Activated CD4-positive, alpha-beta T cell treated with anti-CD3 and anti-CD28 coated beads for 36 hours (primary cell): ENCODE measurements at regions of chr13 and their contacts with region 1.

Region 1: GRCh38 chr13:44917589-44918325 is 71.5 kb downstream of the NUFIP1 start:
- DNase-seq: peak; percentile 96
- ATAC-seq: peak; percentile 81
- H3K4me3 Mint-ChIP-seq: no peak overlapping the region
- H3K27ac Mint-ChIP-seq: no peak overlapping the region
- H3K4me1 Mint-ChIP-seq: peaks cover 3% of the 10 kb centered on the region
- H3K27me3 Mint-ChIP-seq: no peaks in the 10 kb centered on the region

Region 2: DNA sequence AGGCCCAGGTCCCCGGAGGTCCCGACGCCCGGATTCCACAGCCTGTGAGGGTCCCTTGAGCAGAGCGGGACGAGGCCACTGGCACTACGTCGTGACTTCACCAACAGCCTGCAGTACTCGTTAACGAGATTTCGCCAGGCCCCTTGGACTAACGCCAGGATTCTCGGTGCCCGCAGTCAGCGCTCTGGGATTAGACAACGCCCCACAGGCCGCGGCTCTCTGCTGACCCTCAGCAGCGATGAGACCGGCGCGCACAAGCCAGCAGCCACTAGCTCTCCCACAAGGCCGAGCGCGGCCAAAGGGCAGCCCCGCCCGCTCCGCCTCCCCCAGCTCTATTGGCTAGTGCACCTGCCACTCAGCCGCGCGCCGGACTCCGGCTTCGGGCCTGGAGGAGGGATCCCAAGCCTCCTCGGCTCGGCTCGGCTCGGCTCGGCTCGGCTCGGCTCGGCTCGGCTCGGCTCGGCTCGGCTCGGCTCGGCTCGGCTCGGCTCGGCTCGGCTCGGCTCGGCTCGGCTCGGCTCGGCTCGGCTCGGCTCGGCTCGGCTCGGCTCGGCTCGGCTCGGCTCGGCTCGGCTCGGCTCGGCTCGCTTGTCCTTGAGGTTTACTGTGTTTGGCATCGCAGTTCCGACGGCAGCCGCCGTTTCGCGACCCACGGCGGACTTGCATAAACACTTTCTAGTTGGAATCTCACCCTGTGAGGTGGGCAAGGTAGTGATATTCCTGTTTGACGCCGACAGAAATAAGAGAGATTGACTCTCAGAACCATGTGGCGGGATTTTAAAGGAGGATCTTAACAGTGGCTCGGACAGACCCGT is 775.8 kb before region 1 on chr13:
- CTCF ChIA-PET with region 1: no interaction called
- POLR2A ChIA-PET with region 1: no interaction called
- intact Hi-C with region 1: loop called in 1 of 2 experiments (anchors 1 kb)
- DNase-seq: peak; percentile 96
- ATAC-seq: peak; percentile 100
- H3K4me3 Mint-ChIP-seq: peak overlapping the region; percentile 87
- H3K27ac Mint-ChIP-seq: peak overlapping the region; percentile 90
- H3K4me1 Mint-ChIP-seq: peaks cover 15% of the 10 kb centered on the region
- H3K27me3 Mint-ChIP-seq: peaks cover 4% of the 10 kb centered on the region

Region 3: DNA sequence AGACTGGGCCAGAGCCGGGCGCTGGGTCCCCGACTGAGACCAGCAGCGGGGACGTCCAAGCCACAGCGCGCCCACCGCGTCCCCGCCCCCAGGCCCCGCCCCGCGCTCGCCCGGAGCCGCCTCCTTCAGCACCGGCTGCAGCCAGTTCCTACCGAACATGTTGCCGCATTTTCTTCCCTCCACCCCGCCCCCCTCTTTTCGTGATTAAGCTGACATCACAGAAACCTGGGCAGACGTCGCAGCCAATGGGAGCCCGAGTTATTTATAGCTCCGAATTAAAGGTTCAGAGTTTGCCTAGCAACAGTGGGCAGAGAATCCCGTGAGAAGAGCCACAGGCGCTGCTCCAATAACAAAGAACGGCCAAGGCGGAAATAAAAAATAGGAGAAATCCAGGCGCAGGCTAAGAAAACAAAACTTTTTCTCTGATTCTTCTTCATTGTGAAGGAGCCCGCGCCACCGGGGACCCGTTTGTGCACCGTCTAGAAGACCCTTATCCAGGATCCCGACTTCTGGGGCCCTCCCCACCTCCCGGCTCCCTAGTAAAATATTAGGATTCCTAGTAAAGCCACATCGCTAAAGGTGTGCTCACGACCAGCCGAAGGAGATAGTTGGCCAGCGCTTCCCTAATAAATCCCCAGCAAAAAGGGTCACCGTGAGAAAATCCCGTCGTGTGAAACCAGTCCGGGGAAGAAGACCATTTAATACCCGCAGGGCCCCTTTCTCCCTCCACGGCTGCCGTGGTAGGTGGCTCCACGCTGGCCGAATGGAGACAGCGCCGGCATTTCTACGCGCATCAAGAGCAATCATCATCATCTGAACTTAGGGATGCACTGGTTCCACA is 482.4 kb before region 1 on chr13:
- CTCF ChIA-PET with region 1: interaction called, 4 read pairs
- POLR2A ChIA-PET with region 1: no interaction called
- intact Hi-C with region 1: loop called in 1 of 2 experiments (anchors 1 kb)
- DNase-seq: peak; percentile 94
- ATAC-seq: peak; percentile 84
- H3K4me3 Mint-ChIP-seq: peak overlapping the region; percentile 73
- H3K27ac Mint-ChIP-seq: peak overlapping the region; percentile 55
- H3K4me1 Mint-ChIP-seq: peaks cover 18% of the 10 kb centered on the region
- H3K27me3 Mint-ChIP-seq: peaks cover 11% of the 10 kb centered on the region

Region 4: DNA sequence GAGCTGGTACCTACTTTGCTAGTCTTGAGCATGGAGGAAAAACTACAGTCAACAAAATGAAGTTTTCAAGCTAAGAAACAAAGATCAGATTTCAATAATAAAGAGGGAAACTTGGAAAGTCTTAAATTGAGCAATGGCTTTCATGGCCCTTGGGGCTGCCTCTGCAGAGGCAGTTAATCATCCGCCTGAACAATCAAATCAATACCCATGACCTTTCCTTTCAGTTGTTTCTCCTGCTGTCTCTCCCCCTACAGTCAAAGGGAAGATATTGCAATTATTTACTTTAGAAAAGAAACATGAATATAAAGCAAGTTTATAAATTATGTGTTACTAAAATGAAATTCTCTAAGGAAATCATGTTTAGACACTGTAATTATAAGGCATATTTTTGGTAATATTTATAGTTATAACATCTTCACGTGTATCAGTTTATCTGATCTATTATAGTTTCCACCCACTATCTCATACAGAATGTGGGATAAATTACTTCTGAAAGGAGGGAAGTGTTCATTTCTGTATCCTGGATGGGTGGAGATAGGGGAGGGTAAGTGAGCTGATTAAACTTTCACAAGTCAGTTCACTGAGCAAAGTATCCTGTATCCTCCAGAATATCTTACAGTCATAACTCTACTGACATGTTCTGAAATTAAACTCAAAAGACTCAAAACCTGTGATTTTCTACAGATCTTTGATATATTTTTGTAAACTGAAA is 269.2 kb before region 1 on chr13:
- CTCF ChIA-PET with region 1: no interaction called
- POLR2A ChIA-PET with region 1: no interaction called
- intact Hi-C with region 1: loop called in 1 of 2 experiments (anchors 2 kb)
- DNase-seq: peak; percentile 25
- ATAC-seq: peak; percentile 85
- H3K4me3 Mint-ChIP-seq: no peak overlapping the region
- H3K27ac Mint-ChIP-seq: peak overlapping the region; percentile 37
- H3K4me1 Mint-ChIP-seq: peaks cover 23% of the 10 kb centered on the region
- H3K27me3 Mint-ChIP-seq: peaks cover 26% of the 10 kb centered on the region

Region 5: GRCh38 chr13:44815623-44816022 is 102.1 kb before region 1 on chr13:
- CTCF ChIA-PET with region 1: interaction called, 4 read pairs
- POLR2A ChIA-PET with region 1: no interaction called
- intact Hi-C with region 1: loop called (anchors 1 to 5 kb)
- DNase-seq: peak; percentile 70
- ATAC-seq: peak; percentile 85
- H3K4me3 Mint-ChIP-seq: no peak overlapping the region
- H3K27ac Mint-ChIP-seq: no peak overlapping the region
- H3K4me1 Mint-ChIP-seq: peaks cover 32% of the 10 kb centered on the region
- H3K27me3 Mint-ChIP-seq: peaks cover 22% of the 10 kb centered on the region

Region 6: DNA sequence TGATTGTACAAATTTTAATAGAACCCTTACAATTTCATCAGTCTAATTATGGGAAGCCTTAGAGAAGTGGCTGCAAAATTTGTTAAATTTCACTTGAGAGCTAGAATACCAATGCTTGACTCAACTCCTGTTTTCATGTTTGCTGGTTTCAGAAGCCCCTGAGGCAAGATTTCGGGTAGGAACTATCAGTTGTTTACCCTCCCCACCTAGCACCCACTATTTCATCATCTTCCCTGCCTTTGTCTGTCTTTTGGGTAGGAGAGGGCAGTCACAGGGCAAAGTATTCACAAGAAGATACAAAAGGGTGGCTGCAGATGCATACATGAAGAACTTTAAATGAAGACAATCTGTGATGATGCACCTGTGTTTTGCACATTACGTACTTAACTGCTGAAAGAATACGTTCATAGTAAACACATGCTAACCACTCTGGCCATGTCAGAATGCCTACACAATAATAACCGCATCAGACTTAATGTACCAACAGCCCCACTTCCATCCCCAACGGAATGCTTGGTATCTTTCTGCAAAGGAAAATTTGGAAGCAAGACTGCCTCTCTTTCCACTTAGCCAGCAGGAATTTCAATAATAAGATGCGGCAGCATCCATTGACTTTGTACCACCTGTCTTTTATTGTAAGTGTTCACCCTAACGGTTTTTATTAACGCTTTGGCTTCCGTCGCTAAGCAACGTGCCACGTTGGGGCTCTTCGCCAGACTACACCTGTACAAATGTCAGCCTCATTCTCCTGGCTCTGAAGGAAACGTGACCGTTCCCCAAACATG is 392.8 kb after region 1 on chr13:
- CTCF ChIA-PET with region 1: no interaction called
- POLR2A ChIA-PET with region 1: no interaction called
- intact Hi-C with region 1: loop called in 1 of 2 experiments (anchors 2 kb)
- DNase-seq: no peak
- ATAC-seq: no peak
- H3K4me3 Mint-ChIP-seq: peak overlapping the region; percentile 68
- H3K27ac Mint-ChIP-seq: peak overlapping the region; percentile 65
- H3K4me1 Mint-ChIP-seq: peaks cover 20% of the 10 kb centered on the region
- H3K27me3 Mint-ChIP-seq: peaks cover 13% of the 10 kb centered on the region

Region 7: DNA sequence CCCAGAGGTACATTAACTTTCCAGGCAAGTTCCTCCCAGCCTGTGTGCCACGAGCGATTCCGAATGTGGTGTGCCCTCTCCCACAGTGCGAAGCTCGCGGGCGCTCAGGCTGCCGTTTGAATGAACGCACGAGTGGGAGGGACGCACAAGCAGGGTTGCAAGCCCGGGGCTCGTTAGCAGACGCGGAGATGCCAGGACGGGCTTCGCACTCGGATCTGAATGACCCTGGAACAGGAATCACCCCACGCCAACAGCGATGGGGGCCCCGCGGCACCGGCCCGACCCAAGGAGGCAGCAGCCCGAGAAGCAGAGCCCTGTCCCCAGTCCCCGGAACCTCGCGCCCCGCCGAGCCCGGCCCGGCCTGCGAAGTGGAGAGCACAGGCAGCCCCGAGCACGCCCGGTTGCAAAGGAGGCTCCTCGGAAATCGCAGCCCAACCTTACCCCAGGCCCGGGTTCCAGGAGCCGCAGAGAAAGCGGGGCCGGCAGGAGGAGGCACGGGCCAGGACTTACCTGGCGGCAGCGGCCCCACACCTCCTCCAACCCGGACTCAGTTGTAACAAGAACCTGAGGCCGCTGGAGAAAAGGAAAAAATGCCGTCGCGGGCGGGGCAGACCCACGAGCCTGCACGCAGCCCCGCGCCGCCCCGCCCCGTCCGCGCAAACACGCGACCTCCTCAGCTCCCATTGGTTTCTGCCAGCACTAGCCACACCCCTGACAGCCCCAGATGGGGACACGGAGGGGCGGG is 500.2 kb after region 1 on chr13 and contains the start of gene SLC25A30:
- CTCF ChIA-PET with region 1: no interaction called
- POLR2A ChIA-PET with region 1: no interaction called
- intact Hi-C with region 1: loop called in 1 of 2 experiments (anchors 1 kb)
- DNase-seq: peak; percentile 94
- ATAC-seq: peak; percentile 92
- H3K4me3 Mint-ChIP-seq: peak within 1 kb of the TSS; percentile 84
- H3K27ac Mint-ChIP-seq: peak within 1 kb of the TSS; percentile 92
- H3K4me1 Mint-ChIP-seq: peaks cover 23% of the 10 kb centered on the region
- H3K27me3 Mint-ChIP-seq: no peaks in the 10 kb centered on the region
- total RNA-seq, gene SLC25A30: 17.7 to 18.4 TPM

Region 8: DNA sequence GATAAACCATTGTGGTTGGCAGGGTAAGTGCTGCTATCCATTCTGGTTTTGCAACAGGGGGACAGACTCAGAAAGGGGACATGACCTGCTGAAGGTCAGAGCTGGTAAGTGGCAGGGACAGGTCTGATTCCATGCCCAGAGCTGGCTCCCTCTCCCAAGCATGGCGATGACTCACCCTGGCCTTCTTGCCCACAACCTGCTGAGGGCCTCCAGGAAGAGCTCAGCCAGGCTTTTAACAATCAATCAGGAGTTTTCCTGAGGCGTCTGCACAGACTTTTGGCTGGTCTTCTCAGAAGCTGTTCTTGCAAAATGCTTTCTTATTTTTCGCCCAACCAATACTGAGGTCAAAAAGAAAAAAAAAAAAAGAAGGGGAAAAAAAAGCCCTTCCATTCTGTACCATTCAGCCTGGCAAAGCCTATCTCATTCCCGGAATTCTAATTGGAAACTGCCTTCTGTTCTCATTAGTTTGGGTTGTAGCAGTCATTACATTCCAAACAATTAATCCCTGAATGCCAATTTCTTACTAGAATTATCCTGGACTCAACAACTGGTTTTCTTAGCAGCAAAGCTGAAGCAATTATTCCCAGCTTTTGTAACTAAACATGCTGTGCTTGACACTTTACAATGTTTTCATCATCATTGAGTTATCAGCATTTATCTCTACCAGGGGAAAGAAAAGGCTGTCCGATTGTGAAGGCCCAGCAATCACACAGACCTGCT is 916.1 kb after region 1 on chr13:
- CTCF ChIA-PET with region 1: no interaction called
- POLR2A ChIA-PET with region 1: no interaction called
- intact Hi-C with region 1: no loop called
- DNase-seq: no peak
- ATAC-seq: no peak
- H3K4me3 Mint-ChIP-seq: no peak overlapping the region
- H3K27ac Mint-ChIP-seq: no peak overlapping the region
- H3K4me1 Mint-ChIP-seq: no peaks in the 10 kb centered on the region
- H3K27me3 Mint-ChIP-seq: no peaks in the 10 kb centered on the region